ENCODE measurements at regions of chr2 and their contacts with region 1.

Region 1: DNA sequence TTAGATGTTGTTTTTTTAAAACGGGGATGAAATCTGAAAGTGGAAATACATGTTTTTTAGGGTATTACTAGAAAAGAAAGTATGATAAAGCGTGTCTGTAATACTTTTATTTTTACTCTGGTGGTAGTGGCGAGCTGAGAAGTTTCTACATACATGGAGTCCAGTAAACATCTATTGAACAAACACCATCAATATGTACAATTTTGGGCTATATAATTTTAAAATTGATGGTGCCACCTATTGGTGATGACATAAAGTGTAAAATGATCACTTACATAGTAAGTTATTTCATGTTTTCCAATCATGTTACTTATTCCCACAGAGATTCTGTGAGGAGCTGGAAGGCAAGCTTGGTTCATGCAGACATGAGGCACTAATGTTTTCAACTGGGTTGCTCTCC is 31.5 kb upstream of the NFE2L2 start:
- DNase-seq: no peak
- H3K4me3 ChIP-seq: no peak overlapping the region
- CTCF ChIP-seq: no peak

Region 2: DNA sequence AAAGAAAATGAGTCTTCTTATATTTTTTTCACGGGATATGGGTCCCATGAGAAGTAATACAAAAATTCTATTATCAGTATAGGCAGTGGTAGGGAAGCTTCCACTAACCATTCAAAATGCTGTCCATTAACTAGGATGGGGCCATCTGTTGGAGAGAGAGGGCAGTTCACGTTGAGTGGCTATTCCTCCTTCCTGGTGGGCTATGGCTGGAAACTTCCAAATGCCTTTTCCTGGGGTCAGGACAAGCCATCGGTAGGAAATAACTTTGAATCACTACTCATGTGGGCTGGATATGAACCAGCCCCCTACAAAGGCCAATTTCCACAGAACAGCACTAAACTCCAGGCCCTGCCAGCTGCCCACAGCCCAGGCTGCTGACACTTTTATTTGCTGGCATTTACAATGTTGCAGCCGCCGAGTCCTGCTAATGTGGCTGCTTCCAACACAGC is 239.5 kb before region 1 on chr2:
- CTCF ChIA-PET with region 1: no interaction called
- POLR2A ChIA-PET with region 1: no interaction called
- DNase-seq: no peak
- H3K4me3 ChIP-seq: no peak overlapping the region
- CTCF ChIP-seq: no peak

Region 3: DNA sequence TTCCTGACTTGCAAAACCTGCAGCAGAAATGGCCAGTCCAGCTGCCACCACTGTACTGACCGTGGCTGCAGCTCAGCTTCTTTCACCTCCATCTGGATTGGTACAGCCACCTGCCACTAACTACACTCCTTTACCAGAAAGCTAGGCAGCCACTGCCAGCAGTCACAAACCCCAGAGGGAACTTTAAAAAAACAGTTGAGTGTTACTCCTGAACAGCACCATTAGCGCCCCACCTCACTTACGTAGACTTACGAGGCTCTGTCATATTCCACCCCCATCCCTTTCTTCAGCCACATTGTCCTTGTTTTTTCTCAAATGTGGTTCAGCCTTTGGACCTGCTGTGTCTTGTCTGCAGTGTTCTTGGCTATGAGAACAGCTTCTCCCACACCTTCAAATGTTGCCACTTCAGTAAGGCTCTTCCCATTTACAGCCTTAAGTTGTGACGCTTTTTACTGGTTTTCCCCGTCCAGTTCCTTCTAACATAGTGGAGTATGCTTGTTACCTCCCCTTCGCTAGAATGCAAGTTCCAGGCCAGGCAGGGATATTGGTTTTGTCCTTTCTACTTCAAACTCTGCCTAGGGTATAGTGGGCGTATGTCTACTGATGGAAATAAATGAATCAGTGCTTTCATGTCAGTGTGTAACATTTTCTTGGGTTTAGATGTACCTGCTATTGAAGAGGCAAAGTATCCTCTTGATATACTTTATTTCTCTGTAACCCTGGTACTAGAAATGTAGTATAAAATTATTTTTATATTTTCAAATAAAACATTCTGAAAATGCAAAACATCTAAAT is 66.4 kb before region 1 on chr2:
- CTCF ChIA-PET with region 1: interaction called, 10 read pairs
- POLR2A ChIA-PET with region 1: no interaction called
- DNase-seq: no peak
- H3K4me3 ChIP-seq: no peak overlapping the region
- CTCF ChIP-seq: no peak

Region 4: DNA sequence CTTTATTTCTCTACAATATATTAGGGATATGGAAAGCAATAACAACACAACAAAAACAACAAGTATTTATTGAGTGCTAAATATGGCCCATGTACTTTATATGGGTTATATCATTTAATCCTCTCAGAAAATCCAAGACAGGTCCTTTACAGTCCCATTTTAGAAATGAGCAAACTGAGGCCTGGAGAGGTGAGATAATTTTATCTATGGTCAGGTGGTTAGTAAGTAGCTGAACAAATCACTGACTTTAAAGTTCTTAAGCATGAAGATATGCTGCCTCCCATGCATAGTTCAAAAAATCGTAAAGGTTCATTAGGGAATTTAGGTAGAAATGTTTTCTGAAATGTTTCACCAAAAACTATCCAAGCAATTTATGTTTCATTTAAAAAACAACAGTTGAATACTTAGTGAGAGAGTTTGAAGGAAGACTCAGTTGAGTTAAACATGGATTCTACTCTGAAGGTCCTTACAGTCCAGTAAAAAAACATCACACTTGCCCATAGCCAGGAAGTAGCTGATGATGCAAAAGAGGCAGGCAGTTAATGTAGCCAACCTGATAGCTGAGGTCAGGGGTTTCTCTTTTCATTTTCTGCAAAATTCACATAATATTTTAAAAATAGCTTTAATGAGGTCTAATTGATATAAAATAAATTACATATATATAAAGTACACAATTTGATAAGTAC is 23.9 kb before region 1 on chr2:
- CTCF ChIA-PET with region 1: interaction called, 10 read pairs
- POLR2A ChIA-PET with region 1: no interaction called
- DNase-seq: no peak
- H3K4me3 ChIP-seq: no peak overlapping the region
- CTCF ChIP-seq: no peak

Region 5: DNA sequence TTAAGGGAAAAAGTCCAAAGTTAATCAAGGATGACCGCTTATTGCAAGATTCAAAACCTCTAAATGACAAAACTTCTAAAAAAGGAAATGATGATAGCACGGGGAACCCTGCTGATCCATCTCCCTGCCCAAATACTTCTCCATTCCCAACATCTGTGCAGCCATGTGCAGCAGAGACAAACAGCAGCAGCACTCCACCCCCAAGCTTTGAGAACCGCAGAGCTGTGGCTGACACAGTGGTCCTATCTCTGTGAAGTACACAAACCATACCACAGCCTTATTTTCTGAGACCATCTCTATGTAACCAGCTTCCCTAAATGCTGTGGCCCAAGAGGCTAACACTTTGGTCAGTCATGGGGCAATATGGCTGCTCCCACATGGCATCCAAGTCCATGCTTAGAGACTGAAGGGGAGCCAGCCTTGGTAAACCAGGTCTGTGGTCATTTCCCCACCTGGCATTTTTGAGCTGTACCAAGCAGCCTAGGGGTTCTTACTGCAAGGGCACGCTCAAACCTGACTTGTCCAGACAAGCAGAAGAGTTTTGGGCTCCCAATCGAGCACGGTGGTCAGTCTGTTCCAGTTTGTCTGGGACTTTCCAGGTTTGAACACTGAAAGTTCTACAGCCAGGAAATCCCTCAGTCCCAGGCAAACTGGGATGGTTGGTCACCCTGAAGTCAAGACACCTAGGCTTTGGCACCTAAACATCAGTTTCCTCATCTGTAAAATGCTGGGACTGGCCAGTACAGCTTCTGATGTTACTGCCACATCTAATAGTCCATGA is 14.4 kb before region 1 on chr2:
- CTCF ChIA-PET with region 1: interaction called, 43 read pairs
- POLR2A ChIA-PET with region 1: no interaction called
- DNase-seq: no peak
- H3K4me3 ChIP-seq: no peak overlapping the region
- CTCF ChIP-seq: no peak

Region 6: GRCh38 chr2:177306550-177306949 is 10.5 kb after region 1 on chr2:
- CTCF ChIA-PET with region 1: interaction called, 15 read pairs
- POLR2A ChIA-PET with region 1: no interaction called
- DNase-seq: no peak
- H3K4me3 ChIP-seq: no peak overlapping the region
- CTCF ChIP-seq: no peak

Region 7: GRCh38 chr2:177405029-177405692 is 109.1 kb after region 1 on chr2:
- CTCF ChIA-PET with region 1: no interaction called
- POLR2A ChIA-PET with region 1: no interaction called
- DNase-seq: no peak
- H3K4me3 ChIP-seq: no peak overlapping the region
- CTCF ChIP-seq: no peak